PC-3 (cell line): ENCODE measurements at regions of chr13 and their contacts with region 1.

Region 1: DNA sequence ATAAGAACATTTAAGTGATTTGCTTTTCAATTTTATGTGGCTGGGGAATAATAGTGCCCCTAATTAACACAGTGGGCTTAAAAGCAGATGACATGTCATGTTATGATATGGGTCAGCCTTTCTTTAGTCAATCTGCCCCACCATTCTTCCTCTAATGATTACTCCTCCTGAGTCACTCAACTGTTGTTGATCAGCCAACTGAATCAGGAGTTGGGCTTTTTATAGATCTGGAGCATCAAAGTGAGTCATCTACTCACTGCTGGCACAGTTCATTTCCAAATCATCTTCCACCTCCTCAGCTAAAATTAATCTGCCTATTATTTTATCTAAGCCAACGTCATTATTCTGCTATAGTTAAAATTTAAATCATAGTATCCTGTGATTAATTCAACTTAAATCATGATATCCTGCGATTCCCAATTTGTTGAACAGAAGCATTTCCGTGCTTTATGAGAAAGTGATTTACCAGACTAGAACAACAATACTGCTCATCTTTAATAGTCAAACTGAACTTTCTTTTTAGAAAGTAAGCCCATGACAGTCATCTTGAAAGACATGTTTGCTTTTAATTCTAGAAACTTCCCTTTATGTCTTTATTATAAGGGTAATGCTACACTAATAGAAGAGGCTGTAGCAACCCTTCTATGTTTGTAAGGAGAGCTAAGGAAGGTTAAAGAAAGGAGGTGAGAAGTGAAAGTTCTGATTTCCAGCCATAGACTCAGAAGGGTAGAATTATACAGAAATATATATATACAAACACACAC is 551.4 kb downstream of the TBC1D4 start:
- DNase-seq: peak; percentile 86
- ATAC-seq: peak; percentile 74
- H3K4me3 ChIP-seq: peak overlapping the region; percentile 14; the same call in 1 of the 2 replicates
- H3K27ac ChIP-seq: peak overlapping the region; percentile 86
- H3K4me1 ChIP-seq: peaks cover 33% of the 10 kb centered on the region
- H3K27me3 ChIP-seq: no peaks in the 10 kb centered on the region
- CTCF ChIP-seq: no peak

Region 2: DNA sequence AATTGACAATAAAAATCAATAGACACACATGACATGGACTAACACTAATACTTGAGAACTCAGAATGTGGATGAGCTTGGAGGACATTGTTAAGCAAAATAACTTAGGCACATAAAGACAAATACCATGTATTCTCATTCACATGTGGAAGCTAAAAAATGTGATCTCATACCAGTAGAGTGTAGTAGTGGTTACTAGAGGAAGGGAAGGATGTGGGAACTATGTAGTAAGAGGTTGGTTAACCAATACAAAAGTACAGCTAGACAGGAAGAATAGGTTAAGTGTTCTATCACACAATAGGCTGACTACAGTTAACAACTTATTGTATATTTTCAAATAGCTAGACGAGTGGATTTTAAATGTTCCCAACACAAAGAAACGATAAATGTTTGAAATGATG is 380.5 kb before region 1 on chr13:
- CTCF ChIA-PET with region 1: no interaction called
- POLR2A ChIA-PET with region 1: no interaction called
- intact Hi-C with region 1: no loop called
- DNase-seq: no peak
- ATAC-seq: no peak
- H3K4me3 ChIP-seq: no peak overlapping the region
- H3K27ac ChIP-seq: no peak overlapping the region
- H3K4me1 ChIP-seq: no peaks in the 10 kb centered on the region
- H3K27me3 ChIP-seq: no peaks in the 10 kb centered on the region
- CTCF ChIP-seq: no peak

Region 3: DNA sequence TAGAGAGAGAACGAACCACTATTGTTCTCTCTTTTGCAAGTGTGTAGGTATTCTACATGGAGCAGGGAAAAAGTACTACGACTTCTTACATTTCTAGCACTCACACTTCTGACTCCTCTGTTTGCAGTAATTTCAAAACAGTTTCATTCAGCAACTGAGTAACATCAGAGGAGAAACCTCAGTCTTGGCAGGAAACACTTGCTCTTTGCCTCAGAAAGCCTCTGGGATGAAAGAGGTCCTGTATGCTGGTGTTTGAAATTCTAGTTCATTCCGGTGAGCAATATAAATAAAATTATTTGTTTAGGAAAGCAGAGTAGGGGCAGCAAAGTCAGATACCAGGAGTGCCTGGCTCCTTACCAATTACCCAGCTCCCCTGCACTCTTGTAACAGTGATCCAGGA is 44.1 kb before region 1 on chr13:
- CTCF ChIA-PET with region 1: no interaction called
- POLR2A ChIA-PET with region 1: no interaction called
- intact Hi-C with region 1: loop called (anchors 2 kb)
- DNase-seq: peak; percentile 80
- ATAC-seq: peak; percentile 90
- H3K4me3 ChIP-seq: peak overlapping the region; percentile 21; the same call in 1 of the 2 replicates
- H3K27ac ChIP-seq: peak overlapping the region; percentile 88
- H3K4me1 ChIP-seq: peaks cover 33% of the 10 kb centered on the region
- H3K27me3 ChIP-seq: no peaks in the 10 kb centered on the region
- CTCF ChIP-seq: no peak

Region 4: GRCh38 chr13:74978596-74978995 is 48.0 kb after region 1 on chr13:
- CTCF ChIA-PET with region 1: no interaction called
- POLR2A ChIA-PET with region 1: no interaction called
- intact Hi-C with region 1: loop called (anchors 5 kb)
- DNase-seq: no peak
- ATAC-seq: no peak
- H3K4me3 ChIP-seq: no peak overlapping the region
- H3K27ac ChIP-seq: peak overlapping the region; percentile 68
- H3K4me1 ChIP-seq: peaks cover 14% of the 10 kb centered on the region
- H3K27me3 ChIP-seq: no peaks in the 10 kb centered on the region
- CTCF ChIP-seq: no peak